ENCODE measurements at regions of chr1 and their contacts with region 1.

Region 1: DNA sequence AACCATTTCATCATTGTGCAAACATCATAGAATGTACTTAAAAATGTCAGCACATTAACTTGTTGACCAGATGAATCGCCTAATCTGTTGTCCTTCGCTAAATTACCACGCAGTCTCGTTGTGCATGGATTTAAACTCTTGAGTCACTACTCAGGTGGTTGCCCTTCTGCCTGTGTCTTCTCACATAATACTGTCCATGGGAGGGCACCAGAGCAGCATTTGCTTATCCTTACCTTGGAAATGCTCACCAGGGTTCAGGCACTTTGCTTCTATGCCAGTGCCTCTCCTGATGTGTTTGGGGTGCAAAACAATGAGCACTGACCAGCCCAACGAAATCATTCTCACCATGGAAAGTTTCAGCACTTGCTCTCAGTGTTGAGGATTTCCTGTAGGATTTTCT is 559.9 kb downstream of the RWDD3 start:
- DNase-seq: peak; percentile 25
- ATAC-seq: peak; percentile 37; the same call in 1 of the 2 replicates
- H3K4me3 ChIP-seq: no peak overlapping the region
- H3K27ac ChIP-seq: no peak overlapping the region
- H3K4me1 ChIP-seq: no peaks in the 10 kb centered on the region
- H3K27me3 ChIP-seq: no peaks in the 10 kb centered on the region
- CTCF ChIP-seq: peak; percentile 46

Region 2: GRCh38 chr1:95829556-95829955 is 35.7 kb after region 1 on chr1:
- CTCF ChIA-PET with region 1: no interaction called
- POLR2A ChIA-PET with region 1: no interaction called
- intact Hi-C with region 1: no loop called
- DNase-seq: no peak
- ATAC-seq: no peak
- H3K4me3 ChIP-seq: no peak overlapping the region
- H3K27ac ChIP-seq: no peak overlapping the region
- H3K4me1 ChIP-seq: no peaks in the 10 kb centered on the region
- H3K27me3 ChIP-seq: peaks cover 12% of the 10 kb centered on the region; the same call in 1 of the 2 replicates
- CTCF ChIP-seq: no peak

Region 3: DNA sequence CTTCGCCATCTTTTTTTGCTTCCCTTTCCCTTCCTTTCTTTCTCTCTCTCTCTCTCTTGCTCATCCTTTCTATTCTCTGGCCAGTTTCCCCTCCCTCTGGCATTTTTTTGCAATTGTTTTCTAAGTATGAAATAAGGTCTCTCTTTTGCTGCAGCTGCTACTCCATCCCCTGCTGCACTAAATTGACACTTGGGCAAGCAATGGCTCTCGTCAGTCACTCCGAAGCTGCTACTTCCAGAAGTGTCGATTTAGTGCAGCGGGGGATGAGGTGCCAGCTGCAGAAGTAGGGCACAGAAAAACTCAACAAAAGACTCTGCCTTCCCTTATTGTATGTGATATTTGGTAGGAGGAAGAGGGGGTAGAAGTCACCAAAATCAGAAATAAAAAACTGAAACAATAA is 82.4 kb after region 1 on chr1:
- CTCF ChIA-PET with region 1: no interaction called
- POLR2A ChIA-PET with region 1: no interaction called
- intact Hi-C with region 1: no loop called
- DNase-seq: no peak
- ATAC-seq: no peak
- H3K4me3 ChIP-seq: no peak overlapping the region
- H3K27ac ChIP-seq: no peak overlapping the region
- H3K4me1 ChIP-seq: no peaks in the 10 kb centered on the region
- H3K27me3 ChIP-seq: peaks cover 5% of the 10 kb centered on the region; the same call in 1 of the 2 replicates
- CTCF ChIP-seq: no peak

Region 4: GRCh38 chr1:96579636-96580035 is 785.7 kb after region 1 on chr1:
- CTCF ChIA-PET with region 1: no interaction called
- POLR2A ChIA-PET with region 1: interaction called, 15 read pairs
- intact Hi-C with region 1: no loop called
- DNase-seq: peak; percentile 10
- ATAC-seq: no peak
- H3K4me3 ChIP-seq: no peak overlapping the region
- H3K27ac ChIP-seq: no peak overlapping the region
- H3K4me1 ChIP-seq: no peaks in the 10 kb centered on the region
- H3K27me3 ChIP-seq: peaks cover 35% of the 10 kb centered on the region
- CTCF ChIP-seq: no peak